Posterior vena cava (tissue), 2 donors: ENCODE measurements at regions of chr11 and their contacts with region 1.

Region 1: GRCh38 chr11:65888163-65888814 is at the start of gene FIBP:
- DNase-seq: peak; percentile 99
- total RNA-seq, gene FIBP: 39.7 to 40.8 TPM

Region 2: DNA sequence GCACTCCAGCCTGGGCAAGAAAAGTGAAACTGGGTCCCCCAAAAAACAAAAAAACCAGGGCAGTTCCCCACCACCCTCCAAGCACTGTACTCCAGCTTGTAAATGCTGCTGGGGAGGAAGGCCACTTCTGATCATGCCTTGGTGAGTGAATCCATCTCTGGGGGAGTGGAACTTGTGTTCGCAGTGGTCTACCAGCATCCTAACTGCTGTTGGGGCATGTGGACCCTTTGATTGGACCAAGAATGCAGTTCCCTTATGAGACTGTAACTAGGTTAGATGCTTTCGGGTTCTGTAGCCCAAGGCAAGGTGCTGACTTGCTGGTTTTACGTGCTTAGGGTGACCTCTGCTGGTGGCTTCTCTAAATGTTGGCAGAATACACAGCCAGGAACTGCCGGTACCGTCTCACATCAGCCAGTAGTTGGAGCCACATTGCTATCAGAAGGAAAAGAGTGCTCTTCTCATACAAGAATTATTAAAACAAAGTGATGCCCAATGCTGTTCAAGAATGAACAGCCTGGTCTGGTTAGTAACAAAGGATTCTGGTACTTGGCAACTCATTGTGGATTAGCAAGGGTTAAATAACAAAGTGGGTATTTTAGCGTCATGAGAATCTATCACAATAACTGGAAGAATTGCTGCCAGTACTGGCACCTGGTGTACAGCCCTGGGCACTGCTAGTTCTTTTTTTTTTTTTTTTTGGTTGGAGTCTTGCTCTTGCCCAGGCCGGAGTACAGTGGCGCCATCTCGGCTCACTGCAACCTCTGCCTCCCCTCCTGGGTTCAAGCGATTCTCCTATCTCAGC is 100.7 kb after region 1 on chr11:
- intact Hi-C with region 1: loop called (anchors 2 to 5 kb)
- DNase-seq: peak; percentile 91